K562 (cell line): ENCODE measurements at regions of chr12 and their contacts with region 1.

Region 1: GRCh38 chr12:49296034-49296835 is 1.3 kb downstream of the PRPH start:
- DNase-seq: peak; percentile 79 to 94 (median 90)
- ATAC-seq: peak; percentile 89
- H3K4me3 ChIP-seq: peak overlapping the region; percentile 43
- H3K27ac ChIP-seq: no peak overlapping the region
- H3K4me1 ChIP-seq: peaks cover 11 to 56% of the 10 kb centered on the region in 2 experiments; a peak in 4 of 5 replicates
- H3K27me3 ChIP-seq: no peaks in the 10 kb centered on the region
- CTCF ChIP-seq: peak; percentile 81 to 92 (median 87)
- EP300 ChIP-seq: no peak
- POLR2A ChIP-seq: no peak
- RAD21 ChIP-seq: peak in 1 of 2 experiments; percentile 49; a peak in 2 of 4 replicates

Region 2: GRCh38 chr12:49331380-49332222 is 35.4 kb after region 1 on chr12:
- CTCF ChIA-PET with region 1: no interaction called
- POLR2A ChIA-PET with region 1: interaction called, 10 read pairs
- in situ Hi-C with region 1: no loop called
- intact Hi-C with region 1: no loop called
- DNase-seq: peak; percentile 65 to 75 (median 71)
- ATAC-seq: peak; percentile 94
- H3K4me3 ChIP-seq: no peak overlapping the region
- H3K27ac ChIP-seq: no peak overlapping the region
- H3K4me1 ChIP-seq: peaks cover 0 to 22% of the 10 kb centered on the region in 2 experiments; a peak in 2 of 5 replicates
- H3K27me3 ChIP-seq: no peaks in the 10 kb centered on the region
- CTCF ChIP-seq: peak; percentile 90 to 95 (median 94)
- EP300 ChIP-seq: no peak
- POLR2A ChIP-seq: no peak; the same call in 1 of the 2 replicates
- RAD21 ChIP-seq: peak; percentile 75 to 80